Caco-2 (cell line): ENCODE measurements at regions of chr11 and their contacts with region 1.

Region 1: GRCh38 chr11:103927535-103927934 is 108.9 kb upstream of the DDI1 start:
- DNase-seq: no peak
- H3K4me3 ChIP-seq: no peak overlapping the region
- H3K4me3 Mint-ChIP-seq: no peak overlapping the region
- H3K27ac Mint-ChIP-seq: no peak overlapping the region
- H3K4me1 ChIP-seq: peaks cover 54% of the 10 kb centered on the region
- H3K4me1 Mint-ChIP-seq: peaks cover 51% of the 10 kb centered on the region
- H3K27me3 ChIP-seq: no peaks in the 10 kb centered on the region
- H3K27me3 Mint-ChIP-seq: no peaks in the 10 kb centered on the region
- CTCF ChIP-seq: peak; percentile 47 to 61

Region 2: DNA sequence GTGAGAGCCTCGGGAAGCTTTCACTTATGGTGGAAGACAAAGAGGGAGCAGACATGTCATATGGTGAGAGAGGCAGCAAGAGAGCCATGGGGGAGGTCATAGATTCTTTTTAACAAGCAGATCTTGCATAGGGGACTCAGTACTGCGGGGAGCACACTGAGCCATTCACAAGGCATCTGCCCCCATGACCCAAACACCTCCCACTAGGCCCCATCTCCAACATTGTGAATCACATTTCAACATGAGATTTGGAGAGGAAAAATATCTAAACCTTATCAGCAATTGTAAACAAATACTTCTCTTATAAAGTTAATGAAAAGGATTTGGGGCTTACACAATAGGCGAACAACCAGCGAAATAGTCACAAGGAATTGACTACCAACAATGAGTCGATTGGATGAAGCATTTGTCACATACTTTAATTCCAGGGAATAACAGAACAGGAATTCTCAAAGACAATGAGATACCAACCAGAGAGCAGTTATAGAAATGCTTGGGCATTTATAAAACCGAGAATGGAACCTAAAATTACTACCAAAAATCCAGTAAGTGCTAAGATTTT is 116.2 kb after region 1 on chr11:
- CTCF ChIA-PET with region 1: no interaction called
- POLR2A ChIA-PET with region 1: no interaction called
- intact Hi-C with region 1: loop called (anchors 5 kb)
- DNase-seq: no peak
- H3K4me3 ChIP-seq: no peak overlapping the region
- H3K4me3 Mint-ChIP-seq: no peak overlapping the region
- H3K27ac Mint-ChIP-seq: no peak overlapping the region
- H3K4me1 ChIP-seq: peaks cover 17% of the 10 kb centered on the region
- H3K4me1 Mint-ChIP-seq: peaks cover 7% of the 10 kb centered on the region
- H3K27me3 ChIP-seq: no peaks in the 10 kb centered on the region
- H3K27me3 Mint-ChIP-seq: no peaks in the 10 kb centered on the region
- CTCF ChIP-seq: no peak

Region 3: GRCh38 chr11:104055596-104055995 is 128.1 kb after region 1 on chr11:
- CTCF ChIA-PET with region 1: no interaction called
- POLR2A ChIA-PET with region 1: no interaction called
- intact Hi-C with region 1: no loop called
- DNase-seq: no peak
- H3K4me3 ChIP-seq: no peak overlapping the region
- H3K4me3 Mint-ChIP-seq: no peak overlapping the region
- H3K27ac Mint-ChIP-seq: no peak overlapping the region
- H3K4me1 ChIP-seq: no peaks in the 10 kb centered on the region
- H3K4me1 Mint-ChIP-seq: no peaks in the 10 kb centered on the region
- H3K27me3 ChIP-seq: no peaks in the 10 kb centered on the region
- H3K27me3 Mint-ChIP-seq: peaks cover 12% of the 10 kb centered on the region
- CTCF ChIP-seq: no peak

Region 4: GRCh38 chr11:104151404-104152204 is 224.1 kb after region 1 on chr11:
- CTCF ChIA-PET with region 1: no interaction called
- POLR2A ChIA-PET with region 1: no interaction called
- intact Hi-C with region 1: loop called (anchors 1 kb)
- DNase-seq: no peak
- H3K4me3 ChIP-seq: no peak overlapping the region
- H3K4me3 Mint-ChIP-seq: no peak overlapping the region
- H3K27ac Mint-ChIP-seq: no peak overlapping the region
- H3K4me1 ChIP-seq: 0 out of 2 replicates have a peak, but pooled peaks cover 3% of the 10 kb centered on the region
- H3K4me1 Mint-ChIP-seq: no peaks in the 10 kb centered on the region
- H3K27me3 ChIP-seq: no peaks in the 10 kb centered on the region
- H3K27me3 Mint-ChIP-seq: no peaks in the 10 kb centered on the region
- CTCF ChIP-seq: peak; percentile 25 to 33

Region 5: GRCh38 chr11:104198576-104198975 is 271.0 kb after region 1 on chr11:
- CTCF ChIA-PET with region 1: no interaction called
- POLR2A ChIA-PET with region 1: no interaction called
- intact Hi-C with region 1: loop called (anchors 10 kb)
- DNase-seq: no peak
- H3K4me3 ChIP-seq: no peak overlapping the region
- H3K4me3 Mint-ChIP-seq: no peak overlapping the region
- H3K27ac Mint-ChIP-seq: no peak overlapping the region
- H3K4me1 ChIP-seq: peaks cover 22% of the 10 kb centered on the region
- H3K4me1 Mint-ChIP-seq: peaks cover 15% of the 10 kb centered on the region
- H3K27me3 ChIP-seq: no peaks in the 10 kb centered on the region
- H3K27me3 Mint-ChIP-seq: no peaks in the 10 kb centered on the region
- CTCF ChIP-seq: no peak

Region 6: DNA sequence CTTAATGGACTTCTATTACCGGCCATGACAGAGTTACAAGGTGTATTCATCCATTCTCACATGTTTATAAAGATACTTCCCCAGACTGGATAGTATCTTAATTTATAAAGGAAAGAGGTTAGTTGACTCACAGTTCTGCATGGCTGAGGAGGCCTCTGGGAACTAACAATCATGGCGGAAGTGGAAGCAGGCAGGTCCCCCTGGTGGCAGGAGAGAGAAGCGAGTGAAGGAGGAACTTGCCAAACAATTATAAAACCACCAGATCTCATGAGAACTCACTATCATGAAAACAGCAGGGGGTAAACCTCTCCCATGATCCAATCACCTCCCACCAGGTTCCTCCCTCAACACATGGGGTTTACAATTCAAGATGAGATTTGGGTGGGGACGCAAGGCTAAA is 406.4 kb after region 1 on chr11:
- CTCF ChIA-PET with region 1: no interaction called
- POLR2A ChIA-PET with region 1: no interaction called
- intact Hi-C with region 1: loop called (anchors 1 kb)
- DNase-seq: peak; percentile 63 to 66
- H3K4me3 ChIP-seq: no peak overlapping the region
- H3K4me3 Mint-ChIP-seq: no peak overlapping the region
- H3K27ac Mint-ChIP-seq: no peak overlapping the region
- H3K4me1 ChIP-seq: no peaks in the 10 kb centered on the region
- H3K4me1 Mint-ChIP-seq: no peaks in the 10 kb centered on the region
- H3K27me3 ChIP-seq: no peaks in the 10 kb centered on the region
- H3K27me3 Mint-ChIP-seq: peaks cover 3% of the 10 kb centered on the region
- CTCF ChIP-seq: peak; percentile 59 to 79